Stomach (tissue), 19 donors: ENCODE measurements at regions of chr15 and their contacts with region 1.

Region 1: DNA sequence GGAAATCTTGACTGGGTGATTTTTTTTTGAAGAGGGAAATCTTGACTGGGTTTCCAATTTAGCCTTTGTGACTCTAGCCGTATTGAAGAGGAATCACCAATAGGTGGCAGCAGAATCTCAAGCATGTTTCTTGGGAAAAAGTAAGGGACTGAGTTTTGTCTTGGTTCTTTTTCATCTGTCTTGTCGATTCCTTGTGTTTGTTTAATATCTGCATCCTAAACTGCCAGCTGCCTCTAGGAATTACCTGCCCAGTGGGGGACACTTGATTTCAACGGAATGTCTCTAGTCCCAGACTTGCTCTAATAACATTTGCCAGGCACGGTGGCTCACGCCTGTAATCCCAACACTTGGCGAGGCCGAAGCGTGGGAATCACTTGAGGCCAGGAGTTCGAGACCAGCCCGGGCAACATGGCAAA is 89.2 kb downstream of the RBPMS2 start:
- DNase-seq: peak in 1 of 2 donors; percentile 83
- H3K4me3 ChIP-seq: no peak overlapping the region
- H3K27ac ChIP-seq: peak overlapping the region in 1 of 5 donors; percentile 70
- H3K4me1 ChIP-seq: peaks cover 2 to 47% (median 31%) of the 10 kb centered on the region in 4 donors
- H3K27me3 ChIP-seq: no peaks in the 10 kb centered on the region
- CTCF ChIP-seq: peak in 5 of 7 experiments; percentile 50 to 82 (median 67)
- EP300 ChIP-seq: no peak
- POLR2A ChIP-seq: no peak

Region 2: DNA sequence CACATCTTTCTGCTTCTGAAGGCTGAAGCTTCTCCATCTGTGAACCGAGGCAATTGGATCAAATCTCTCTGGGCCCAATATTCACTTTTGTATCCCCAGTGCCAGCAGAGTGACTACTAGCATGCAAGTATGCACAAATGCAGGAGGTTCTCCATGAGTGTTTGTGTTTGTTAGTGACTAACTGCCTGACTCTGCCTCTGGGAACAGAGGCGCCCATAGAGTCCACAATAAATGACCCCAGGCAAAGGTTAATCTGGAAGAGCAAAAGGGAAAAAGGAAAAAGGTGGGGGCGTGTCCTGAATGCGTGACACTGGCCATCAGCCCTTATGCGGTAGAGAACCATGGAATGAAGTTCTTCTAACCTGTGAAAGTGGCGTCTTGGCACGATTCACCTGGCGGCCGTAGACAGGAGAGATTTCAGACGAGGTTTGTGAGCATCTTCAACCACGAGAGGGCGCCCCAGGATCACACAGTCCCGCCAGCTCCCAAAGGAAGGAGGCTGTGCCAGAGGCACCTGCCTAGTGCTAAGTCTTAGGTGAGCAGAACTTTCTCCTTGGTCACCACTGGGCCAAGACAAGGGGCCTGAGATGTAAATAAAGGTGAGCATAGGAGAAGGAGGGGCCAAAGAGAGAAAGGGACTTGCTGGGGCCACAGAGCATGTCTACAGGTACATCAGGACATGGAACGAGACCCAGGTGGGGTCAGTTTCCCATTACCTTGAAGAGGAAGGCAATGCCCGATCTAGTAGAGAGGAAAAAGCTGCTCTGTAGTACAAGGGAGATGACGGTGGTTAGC is 45.0 kb after region 1 on chr15:
- intact Hi-C with region 1: loop called (anchors 5 kb)
- DNase-seq: peak; percentile 94 to 95
- H3K4me3 ChIP-seq: no peak overlapping the region
- H3K27ac ChIP-seq: peak overlapping the region in 1 of 5 donors; percentile 35
- H3K4me1 ChIP-seq: peaks cover 0 to 12% (median 5%) of the 10 kb centered on the region in 4 donors
- H3K27me3 ChIP-seq: no peaks in the 10 kb centered on the region
- CTCF ChIP-seq: peak in 5 of 7 experiments; percentile 79 to 93 (median 87)
- EP300 ChIP-seq: no peak
- POLR2A ChIP-seq: no peak

Region 3: DNA sequence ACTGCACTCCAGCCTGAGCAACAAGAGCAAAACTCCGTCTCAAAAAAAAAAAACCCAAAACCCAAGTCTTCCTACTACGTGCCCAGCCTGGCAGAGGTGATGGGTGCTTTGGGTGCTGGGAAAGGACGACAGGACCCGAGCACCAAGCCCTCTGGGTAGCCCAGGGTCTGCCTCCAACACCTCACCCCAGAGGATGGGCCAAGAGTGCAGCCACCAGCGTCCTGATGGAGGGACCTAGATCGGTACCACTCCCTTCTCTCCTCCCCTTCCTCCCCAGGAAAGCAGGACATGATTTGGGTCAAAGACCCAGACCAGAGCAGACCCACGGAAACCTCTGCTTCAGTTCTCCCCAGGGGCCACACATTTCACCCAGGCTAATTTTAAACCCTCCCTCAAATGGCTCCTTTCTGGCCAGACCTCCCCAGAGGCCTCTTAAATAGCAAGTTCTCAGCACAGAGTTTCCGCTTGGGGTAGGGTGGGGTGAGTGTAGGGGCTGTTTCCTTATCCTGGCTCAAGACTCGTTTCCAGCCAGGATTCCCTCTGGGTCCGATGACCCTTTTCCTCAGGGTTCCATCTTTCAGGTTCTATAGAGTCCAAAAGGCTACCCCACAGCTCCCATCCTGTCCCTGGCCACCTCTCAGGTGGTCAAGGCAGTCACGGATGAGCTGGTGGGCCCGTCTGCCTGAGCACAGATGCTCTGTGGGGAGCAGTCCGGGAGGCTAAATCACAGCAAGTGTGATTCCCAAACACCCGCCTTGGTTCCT is 68.6 kb after region 1 on chr15:
- intact Hi-C with region 1: no loop called
- DNase-seq: no peak
- H3K4me3 ChIP-seq: no peak overlapping the region
- H3K27ac ChIP-seq: peak overlapping the region in 3 of 5 donors; percentile 29 to 67 (median 39)
- H3K4me1 ChIP-seq: peaks cover 0 to 32% (median 2%) of the 10 kb centered on the region in 4 donors
- H3K27me3 ChIP-seq: no peaks in the 10 kb centered on the region
- CTCF ChIP-seq: no peak
- EP300 ChIP-seq: no peak
- POLR2A ChIP-seq: no peak